Activated T-helper 1 cell treated with anti-CD3 and anti-CD28 coated beads, Interleukin-12 subunit alpha, Interleukin-12 subunit beta, Interleukin-2, Interleukin-4 antibody, amounts not matched to agents 30 ng/mL and 10 ng/mL and 1 ng/mL, durations not matched to agents 14 hours and 24 hours and 36 hours (primary cell): ENCODE measurements at regions of chr18 and their contacts with region 1.

Region 1: DNA sequence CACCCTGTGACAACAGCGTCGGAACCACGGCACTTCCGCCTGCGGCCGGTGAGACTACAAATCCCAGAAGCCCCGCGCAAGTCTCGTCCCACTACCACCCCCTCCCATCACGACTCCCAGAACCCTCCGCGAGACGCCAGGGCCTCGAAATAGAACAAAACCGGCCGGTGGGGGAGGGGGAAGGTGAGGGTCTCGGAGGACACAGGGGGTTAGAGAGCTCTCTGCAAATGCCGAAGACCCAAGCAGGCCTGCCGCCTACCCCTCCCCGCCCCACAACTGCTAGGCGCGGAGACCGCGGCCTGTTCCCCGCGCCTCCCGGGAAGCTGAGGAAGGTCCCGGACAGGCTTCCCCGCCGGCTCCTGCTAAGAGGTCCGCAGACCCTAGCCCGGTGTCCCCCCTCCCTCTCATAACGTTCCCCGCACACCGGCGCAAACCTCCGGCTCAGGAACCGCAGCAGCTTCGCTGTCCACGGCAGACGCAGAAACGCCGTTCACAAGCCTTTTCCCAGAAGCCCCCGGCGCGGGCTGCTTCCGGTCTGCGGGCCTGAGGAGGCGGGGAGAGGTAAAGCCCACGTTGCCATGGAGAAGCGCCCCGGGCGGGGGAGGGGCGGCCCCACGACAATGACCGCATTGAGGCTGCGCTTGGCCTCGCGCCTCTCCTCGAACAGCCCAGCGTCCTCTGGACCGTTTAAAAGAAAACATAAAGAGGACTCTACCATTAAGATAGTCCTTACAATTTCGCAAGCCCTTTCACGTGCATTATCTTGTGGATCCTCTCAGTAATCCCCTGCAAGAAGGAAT is at the start of gene ZNF24:
- DNase-seq: peak; percentile 90
- H3K4me3 Mint-ChIP-seq: peak within 1 kb of the TSS; percentile 99
- H3K27ac Mint-ChIP-seq: peak within 1 kb of the TSS; percentile 98
- H3K4me1 Mint-ChIP-seq: peaks cover 38% of the 10 kb centered on the region
- H3K27me3 Mint-ChIP-seq: no peaks in the 10 kb centered on the region
- total RNA-seq, gene ZNF24: 56.4 and 56.6 TPM in 2 replicates

Region 2: DNA sequence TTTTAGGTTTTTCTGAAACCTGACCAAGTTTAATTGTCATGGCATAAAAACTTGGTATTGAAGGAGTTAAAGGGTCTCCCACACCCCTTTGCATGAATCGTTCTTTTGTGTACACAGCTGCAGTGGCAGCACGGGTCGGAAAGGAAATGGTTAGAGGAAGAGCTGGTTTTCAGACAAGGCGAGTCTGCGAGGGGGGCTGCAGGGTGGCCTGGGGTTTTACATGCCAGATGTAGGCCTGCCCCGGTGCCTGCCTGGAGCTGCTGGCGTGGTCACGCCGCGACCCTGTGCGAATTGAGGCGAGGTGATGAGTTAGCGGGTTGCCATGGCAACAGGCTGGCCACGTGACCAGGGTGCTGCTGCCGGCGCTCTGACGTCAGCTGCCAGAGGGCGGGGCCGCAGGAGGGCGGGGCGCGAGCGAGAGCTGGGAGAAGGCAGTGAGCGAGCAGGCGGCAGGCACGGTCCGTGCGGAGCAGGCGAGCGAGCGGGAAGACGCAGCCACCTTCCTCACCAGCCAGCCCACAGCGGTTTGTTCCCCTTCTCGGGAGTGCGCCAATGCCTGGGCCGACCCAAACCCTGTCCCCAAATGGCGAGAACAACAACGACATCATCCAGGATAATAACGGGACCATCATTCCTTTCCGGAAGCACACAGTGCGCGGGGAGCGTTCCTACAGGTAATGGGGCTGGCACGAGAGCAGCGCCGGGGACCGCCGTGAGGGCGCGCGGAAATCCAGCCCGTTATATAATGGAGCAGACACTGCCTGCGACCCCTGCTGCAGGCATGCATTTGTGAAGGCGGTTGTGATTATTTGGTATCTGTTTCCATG is 302.9 kb before region 1 on chr18 and contains the start of gene MAPRE2:
- intact Hi-C with region 1: loop called (anchors 1 kb)
- DNase-seq: peak; percentile 98
- H3K4me3 Mint-ChIP-seq: peak within 1 kb of the TSS; percentile 96
- H3K27ac Mint-ChIP-seq: peak within 1 kb of the TSS; percentile 99
- H3K4me1 Mint-ChIP-seq: peaks cover 57% of the 10 kb centered on the region
- H3K27me3 Mint-ChIP-seq: no peaks in the 10 kb centered on the region
- total RNA-seq, gene MAPRE2: 50.7 TPM in 2 replicates

Region 3: DNA sequence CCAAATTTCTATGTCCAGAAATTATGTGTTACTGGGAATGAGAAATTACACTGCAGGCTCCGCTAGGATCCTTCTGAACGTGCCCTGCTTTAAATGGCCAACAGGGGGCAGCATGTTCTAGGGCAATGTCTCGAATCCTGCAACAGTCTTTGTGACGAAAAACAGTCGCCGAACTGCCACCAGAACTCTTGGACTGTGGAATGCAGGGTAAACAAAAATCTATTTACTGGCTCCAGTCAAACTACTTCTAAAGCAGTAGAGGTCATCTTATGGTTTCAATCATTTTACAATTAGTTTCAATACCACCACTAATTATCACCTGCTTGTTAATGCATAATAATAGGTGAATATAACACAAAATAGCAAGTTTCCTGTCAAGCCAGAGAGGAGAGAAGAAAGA is 113.1 kb before region 1 on chr18:
- intact Hi-C with region 1: loop called (anchors 1 kb)
- DNase-seq: peak; percentile 65
- H3K4me3 Mint-ChIP-seq: peak overlapping the region; percentile 44
- H3K27ac Mint-ChIP-seq: peak overlapping the region; percentile 0
- H3K4me1 Mint-ChIP-seq: peaks cover 4% of the 10 kb centered on the region
- H3K27me3 Mint-ChIP-seq: no peaks in the 10 kb centered on the region

Region 4: DNA sequence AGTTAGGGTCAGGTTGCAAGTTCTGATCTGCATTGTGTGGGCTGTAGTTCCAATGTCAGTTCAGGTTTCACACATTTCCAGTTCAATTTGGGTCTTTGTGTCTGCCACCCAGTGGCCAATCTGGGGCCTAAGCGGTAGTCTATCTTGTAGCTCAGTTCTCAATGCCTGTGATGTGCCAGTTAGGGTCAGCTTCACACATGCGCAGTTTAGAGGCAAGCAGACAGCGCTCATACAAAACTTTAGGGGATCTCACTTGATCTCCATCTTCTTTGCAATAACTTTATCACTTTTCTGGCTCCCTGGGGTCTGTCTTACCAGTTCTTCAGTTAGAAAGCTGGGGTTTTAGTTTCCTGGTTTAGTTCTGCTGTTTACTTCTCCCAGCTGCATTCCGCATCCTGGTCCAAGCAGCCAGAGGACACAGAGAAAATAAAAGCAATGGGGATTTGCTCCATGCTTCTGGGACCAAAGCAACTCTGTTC is 11.0 kb after region 1 on chr18:
- intact Hi-C with region 1: loop called (anchors 1 kb)
- DNase-seq: peak; percentile 26
- H3K4me3 Mint-ChIP-seq: no peak overlapping the region
- H3K27ac Mint-ChIP-seq: no peak overlapping the region
- H3K4me1 Mint-ChIP-seq: peaks cover 4% of the 10 kb centered on the region
- H3K27me3 Mint-ChIP-seq: no peaks in the 10 kb centered on the region

Region 5: GRCh38 chr18:35432565-35433001 is 88.4 kb after region 1 on chr18:
- intact Hi-C with region 1: no loop called
- DNase-seq: no peak
- H3K4me3 Mint-ChIP-seq: no peak overlapping the region
- H3K27ac Mint-ChIP-seq: no peak overlapping the region
- H3K4me1 Mint-ChIP-seq: no peaks in the 10 kb centered on the region
- H3K27me3 Mint-ChIP-seq: peaks cover 8% of the 10 kb centered on the region

Region 6: GRCh38 chr18:35624146-35624545 is 280.0 kb after region 1 on chr18:
- intact Hi-C with region 1: loop called (anchors 5 kb)
- DNase-seq: no peak
- H3K4me3 Mint-ChIP-seq: peak overlapping the region; percentile 23
- H3K27ac Mint-ChIP-seq: peak overlapping the region; percentile 67
- H3K4me1 Mint-ChIP-seq: peaks cover 39% of the 10 kb centered on the region
- H3K27me3 Mint-ChIP-seq: no peaks in the 10 kb centered on the region

Region 7: DNA sequence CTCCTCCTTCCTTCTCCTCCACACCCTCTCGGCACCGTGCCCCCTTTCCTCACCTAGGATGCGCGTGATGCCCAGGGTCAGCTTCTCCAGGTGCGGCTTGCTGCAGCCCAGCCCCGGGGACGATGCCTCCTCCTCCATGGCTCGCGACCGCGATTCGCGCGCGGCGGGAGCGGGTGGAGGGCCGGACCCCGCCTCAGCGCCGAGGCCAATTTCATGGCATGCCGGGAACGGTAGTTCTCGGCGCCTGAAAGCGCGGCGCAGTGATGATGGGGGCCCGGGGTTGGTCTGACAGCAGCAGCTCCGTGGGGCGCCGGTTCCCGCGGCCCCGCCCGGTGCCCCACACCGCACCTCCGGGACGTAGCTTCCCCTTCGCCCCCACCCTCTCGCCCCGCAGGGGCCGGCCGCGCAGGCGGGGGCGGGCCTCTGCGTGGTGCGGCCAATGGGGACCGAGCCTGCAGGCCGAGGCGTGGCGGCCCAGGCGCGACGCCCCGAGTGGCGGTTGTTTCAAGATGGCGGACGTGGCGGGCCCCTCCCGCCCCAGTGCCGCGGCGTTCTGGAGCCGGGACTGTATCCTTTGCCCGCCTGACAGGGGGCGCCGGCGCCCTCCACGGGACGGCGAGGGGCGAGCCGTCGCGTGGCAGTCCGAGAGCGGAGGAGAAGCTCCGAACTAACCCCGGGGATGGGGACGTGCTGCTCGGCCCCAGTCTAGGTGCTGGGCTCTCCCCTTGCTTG is 1484.7 kb after region 1 on chr18 and contains the starts of genes KIAA1328 and TPGS2:
- intact Hi-C with region 1: loop called (anchors 5 kb)
- DNase-seq: peak; percentile 88
- H3K4me3 Mint-ChIP-seq: peak within 1 kb of the TSS; percentile 86
- H3K27ac Mint-ChIP-seq: peak within 1 kb of the TSS; percentile 94
- H3K4me1 Mint-ChIP-seq: peaks cover 51% of the 10 kb centered on the region
- H3K27me3 Mint-ChIP-seq: no peaks in the 10 kb centered on the region
- total RNA-seq, gene KIAA1328: 6.7 and 8.2 TPM in 2 replicates
- total RNA-seq, gene TPGS2: 68.5 and 72.6 TPM in 2 replicates